Activated CD4-positive, alpha-beta memory T cell treated with anti-CD3 and anti-CD28 coated beads for 36 hours (primary cell): ENCODE measurements at regions of chr16 and their contacts with region 1.

Region 1: GRCh38 chr16:23435500-23435899 is 17.5 kb downstream of the COG7 start:
- DNase-seq: peak; percentile 78
- H3K4me3 Mint-ChIP-seq: no peak overlapping the region
- H3K27ac Mint-ChIP-seq: no peak overlapping the region
- H3K4me1 Mint-ChIP-seq: no peaks in the 10 kb centered on the region
- H3K27me3 Mint-ChIP-seq: no peaks in the 10 kb centered on the region

Region 2: GRCh38 chr16:22262460-22262859 is 1173.0 kb before region 1 on chr16:
- CTCF ChIA-PET with region 1: no interaction called
- POLR2A ChIA-PET with region 1: no interaction called
- intact Hi-C with region 1: no loop called
- DNase-seq: peak; percentile 20
- H3K4me3 Mint-ChIP-seq: no peak overlapping the region
- H3K27ac Mint-ChIP-seq: peak overlapping the region; percentile 23
- H3K4me1 Mint-ChIP-seq: peaks cover 8% of the 10 kb centered on the region
- H3K27me3 Mint-ChIP-seq: no peaks in the 10 kb centered on the region

Region 3: DNA sequence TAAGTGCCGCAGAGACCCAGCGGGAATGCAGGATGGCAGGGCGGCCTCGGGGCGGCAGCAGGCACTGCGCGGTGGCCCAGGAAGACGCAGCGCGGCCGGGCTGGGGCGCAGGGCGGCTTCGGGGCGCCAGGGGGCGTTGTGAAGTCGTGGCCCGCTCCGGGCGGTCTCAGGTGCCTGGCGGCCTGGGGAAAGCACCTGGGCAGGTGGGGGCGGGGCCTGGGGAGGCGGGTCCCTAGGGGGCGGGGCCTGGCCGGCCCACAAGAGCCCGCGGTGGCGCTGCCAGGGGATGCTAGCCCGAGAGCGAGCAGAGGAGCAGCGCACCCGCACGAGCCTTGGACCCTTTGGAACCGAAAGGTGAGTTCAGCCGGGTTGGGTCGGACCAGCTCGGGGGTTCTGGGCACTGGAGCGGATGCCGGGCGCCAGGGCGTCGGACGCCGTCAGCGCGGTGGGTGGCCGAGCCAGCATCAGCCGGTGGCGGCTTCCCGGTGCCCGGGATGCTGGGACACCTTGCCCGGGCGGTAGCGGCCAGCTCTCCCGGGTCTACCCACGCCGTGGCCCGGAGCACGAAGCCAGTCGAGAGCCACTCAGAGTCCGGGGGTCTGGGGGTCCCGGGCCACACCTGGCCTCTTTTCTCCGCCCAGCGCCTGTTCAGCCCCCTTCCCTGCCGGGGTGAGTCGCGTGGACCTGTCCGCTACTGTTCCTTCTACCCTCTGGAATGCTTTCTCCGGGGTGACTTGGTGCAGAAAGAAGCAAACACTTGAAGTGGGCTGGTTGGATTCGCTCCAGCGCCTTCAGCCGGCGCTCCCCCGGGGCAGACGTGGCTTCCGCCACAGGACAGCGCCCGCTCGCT is 252.8 kb before region 1 on chr16 and contains the start of gene SCNN1G:
- CTCF ChIA-PET with region 1: interaction called, 96 read pairs
- POLR2A ChIA-PET with region 1: no interaction called
- intact Hi-C with region 1: loop called (anchors 1 kb)
- DNase-seq: peak; percentile 87
- H3K4me3 Mint-ChIP-seq: peak within 1 kb of the TSS; percentile 30
- H3K27ac Mint-ChIP-seq: no peak within 1 kb of the TSS
- H3K4me1 Mint-ChIP-seq: peaks cover 7% of the 10 kb centered on the region
- H3K27me3 Mint-ChIP-seq: peaks cover 46% of the 10 kb centered on the region
- total RNA-seq, gene SCNN1G: not detected

Region 4: GRCh38 chr16:23267494-23268051 is 167.9 kb before region 1 on chr16:
- CTCF ChIA-PET with region 1: no interaction called
- POLR2A ChIA-PET with region 1: no interaction called
- intact Hi-C with region 1: no loop called
- DNase-seq: no peak
- H3K4me3 Mint-ChIP-seq: no peak overlapping the region
- H3K27ac Mint-ChIP-seq: no peak overlapping the region
- H3K4me1 Mint-ChIP-seq: no peaks in the 10 kb centered on the region
- H3K27me3 Mint-ChIP-seq: peaks cover 9% of the 10 kb centered on the region

Region 5: GRCh38 chr16:23416816-23417215 is 18.7 kb before region 1 on chr16:
- CTCF ChIA-PET with region 1: interaction called, 33 read pairs
- POLR2A ChIA-PET with region 1: no interaction called
- intact Hi-C with region 1: no loop called
- DNase-seq: no peak
- H3K4me3 Mint-ChIP-seq: no peak overlapping the region
- H3K27ac Mint-ChIP-seq: no peak overlapping the region
- H3K4me1 Mint-ChIP-seq: no peaks in the 10 kb centered on the region
- H3K27me3 Mint-ChIP-seq: no peaks in the 10 kb centered on the region

Region 6: DNA sequence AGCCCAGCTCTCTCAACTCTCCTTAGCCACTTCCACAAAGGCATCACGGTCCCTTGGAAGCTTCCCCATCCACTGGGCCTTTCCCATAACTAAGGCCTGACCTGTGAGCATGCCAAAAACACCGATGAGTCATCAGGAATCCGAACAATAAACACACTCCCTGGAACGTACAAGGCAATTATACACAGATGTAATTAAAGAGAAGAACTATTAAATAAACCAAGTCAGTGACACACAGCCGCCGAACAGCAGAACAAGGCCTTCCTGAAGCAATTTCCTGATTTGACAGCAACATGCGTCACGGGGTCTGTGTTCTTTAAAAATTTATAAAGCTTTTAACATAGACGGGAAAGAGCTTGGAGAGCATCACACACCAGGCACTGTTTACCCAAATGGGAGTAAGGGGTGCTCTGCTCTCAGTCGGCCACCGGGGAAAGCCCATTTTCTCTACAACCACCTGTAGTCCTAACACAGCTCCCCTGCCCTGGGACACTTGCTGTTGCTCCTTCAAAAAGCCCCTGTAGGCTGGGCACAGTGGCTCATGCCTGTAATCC is 11.9 kb before region 1 on chr16:
- CTCF ChIA-PET with region 1: interaction called, 30 read pairs
- POLR2A ChIA-PET with region 1: no interaction called
- intact Hi-C with region 1: no loop called
- DNase-seq: no peak
- H3K4me3 Mint-ChIP-seq: no peak overlapping the region
- H3K27ac Mint-ChIP-seq: no peak overlapping the region
- H3K4me1 Mint-ChIP-seq: no peaks in the 10 kb centered on the region
- H3K27me3 Mint-ChIP-seq: no peaks in the 10 kb centered on the region

Region 7: DNA sequence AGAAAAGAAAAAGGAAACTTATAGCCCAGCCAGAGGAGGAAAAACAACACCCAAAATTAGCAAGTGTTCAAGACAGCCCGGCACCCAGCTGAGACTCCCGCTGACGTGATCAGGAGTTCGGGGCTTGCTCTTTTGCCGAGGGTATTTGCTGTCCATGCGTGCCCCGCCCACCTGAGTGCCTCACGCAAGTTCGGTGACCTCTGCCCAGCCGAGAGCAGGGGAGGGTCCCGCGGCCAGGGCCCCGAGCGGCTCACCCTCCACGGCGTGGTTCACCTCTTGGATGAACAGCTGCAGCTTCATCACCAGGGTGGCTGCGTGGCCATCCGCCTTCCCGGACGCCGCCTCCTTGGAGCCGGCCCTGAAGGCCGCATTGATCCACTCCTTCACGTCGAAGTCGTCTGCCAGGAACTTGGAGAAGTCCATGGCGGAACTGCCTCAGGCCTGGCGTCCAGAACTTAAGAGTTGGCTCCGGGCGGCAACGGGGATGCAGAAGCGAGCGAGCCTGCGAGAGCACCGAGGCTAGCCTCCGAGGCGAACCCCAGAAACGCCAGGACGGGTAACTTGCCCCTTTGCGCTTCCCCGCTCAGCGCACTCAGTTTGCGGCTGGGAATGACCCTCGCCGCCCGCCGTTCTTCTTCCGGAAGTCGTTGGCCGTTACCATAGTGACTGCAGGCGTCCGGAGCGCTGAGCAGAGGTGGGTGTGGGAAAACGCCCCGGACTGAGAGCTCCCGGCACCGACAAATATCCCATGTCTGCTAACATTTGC is 17.3 kb after region 1 on chr16 and contains the start of gene COG7:
- CTCF ChIA-PET with region 1: interaction called, 32 read pairs
- POLR2A ChIA-PET with region 1: no interaction called
- intact Hi-C with region 1: no loop called
- DNase-seq: peak; percentile 91
- H3K4me3 Mint-ChIP-seq: peak within 1 kb of the TSS; percentile 91
- H3K27ac Mint-ChIP-seq: peak within 1 kb of the TSS; percentile 52
- H3K4me1 Mint-ChIP-seq: peaks cover 25% of the 10 kb centered on the region
- H3K27me3 Mint-ChIP-seq: no peaks in the 10 kb centered on the region
- total RNA-seq, gene COG7: 17.0 to 18.1 TPM

Region 8: DNA sequence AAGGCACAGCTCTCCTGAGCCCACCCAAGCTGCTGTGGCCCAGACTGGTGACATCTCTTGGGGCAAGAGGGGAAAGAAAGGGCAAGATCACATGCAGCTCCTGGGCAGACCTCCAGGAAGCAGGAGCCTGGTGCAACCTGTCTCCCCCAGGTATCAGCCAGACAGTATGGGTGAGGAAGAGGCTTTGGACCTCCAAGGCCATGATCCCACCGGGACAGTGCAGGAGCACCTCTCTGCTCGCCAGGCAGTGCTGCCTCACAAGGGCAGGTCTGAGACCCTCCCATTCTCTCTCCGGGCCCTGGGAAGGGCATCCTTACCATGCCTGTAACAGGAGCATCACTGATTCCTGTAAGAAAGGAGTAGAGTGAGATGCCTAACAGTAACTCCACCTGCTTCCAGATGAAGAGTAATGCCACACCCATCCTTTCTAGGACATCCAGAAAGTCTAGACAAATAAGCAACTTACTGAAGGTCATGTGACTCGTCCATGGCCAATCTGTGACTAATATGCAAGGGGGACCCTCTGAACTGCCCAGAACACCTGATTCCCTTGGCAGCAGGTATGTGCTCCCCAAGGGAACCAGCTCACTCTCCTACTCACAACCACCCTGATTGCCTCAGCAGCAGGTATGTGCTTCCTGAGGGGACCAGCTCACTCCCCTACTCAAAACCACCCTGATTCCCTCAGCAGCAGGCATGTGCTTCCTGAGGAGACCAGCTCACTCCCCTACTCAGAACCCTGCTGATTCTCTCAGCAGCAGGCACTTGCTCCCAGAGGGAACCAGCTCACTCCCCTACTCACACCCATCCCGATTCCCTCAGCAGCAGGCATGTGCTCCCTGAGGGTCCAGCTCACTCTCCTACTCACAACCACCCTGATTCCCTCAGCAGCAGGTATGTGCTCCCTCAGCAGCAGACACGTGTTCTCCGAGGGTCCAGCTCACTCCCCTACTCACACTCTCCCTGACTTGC is 43.4 kb after region 1 on chr16:
- CTCF ChIA-PET with region 1: interaction called, 11 read pairs
- POLR2A ChIA-PET with region 1: no interaction called
- intact Hi-C with region 1: no loop called
- DNase-seq: no peak
- H3K4me3 Mint-ChIP-seq: no peak overlapping the region
- H3K27ac Mint-ChIP-seq: no peak overlapping the region
- H3K4me1 Mint-ChIP-seq: peaks cover 2% of the 10 kb centered on the region
- H3K27me3 Mint-ChIP-seq: no peaks in the 10 kb centered on the region

Region 9: GRCh38 chr16:23518435-23518891 is 83.0 kb after region 1 on chr16:
- CTCF ChIA-PET with region 1: no interaction called
- POLR2A ChIA-PET with region 1: no interaction called
- intact Hi-C with region 1: no loop called
- DNase-seq: no peak
- H3K4me3 Mint-ChIP-seq: no peak overlapping the region
- H3K27ac Mint-ChIP-seq: no peak overlapping the region
- H3K4me1 Mint-ChIP-seq: peaks cover 32% of the 10 kb centered on the region
- H3K27me3 Mint-ChIP-seq: no peaks in the 10 kb centered on the region

Region 10: GRCh38 chr16:24309222-24309905 is 873.9 kb after region 1 on chr16:
- CTCF ChIA-PET with region 1: no interaction called
- POLR2A ChIA-PET with region 1: no interaction called
- intact Hi-C with region 1: no loop called
- DNase-seq: peak; percentile 80
- H3K4me3 Mint-ChIP-seq: no peak overlapping the region
- H3K27ac Mint-ChIP-seq: no peak overlapping the region
- H3K4me1 Mint-ChIP-seq: no peaks in the 10 kb centered on the region
- H3K27me3 Mint-ChIP-seq: peaks cover 21% of the 10 kb centered on the region